ENCODE measurements at regions of chr14 and their contacts with region 1.

Region 1: DNA sequence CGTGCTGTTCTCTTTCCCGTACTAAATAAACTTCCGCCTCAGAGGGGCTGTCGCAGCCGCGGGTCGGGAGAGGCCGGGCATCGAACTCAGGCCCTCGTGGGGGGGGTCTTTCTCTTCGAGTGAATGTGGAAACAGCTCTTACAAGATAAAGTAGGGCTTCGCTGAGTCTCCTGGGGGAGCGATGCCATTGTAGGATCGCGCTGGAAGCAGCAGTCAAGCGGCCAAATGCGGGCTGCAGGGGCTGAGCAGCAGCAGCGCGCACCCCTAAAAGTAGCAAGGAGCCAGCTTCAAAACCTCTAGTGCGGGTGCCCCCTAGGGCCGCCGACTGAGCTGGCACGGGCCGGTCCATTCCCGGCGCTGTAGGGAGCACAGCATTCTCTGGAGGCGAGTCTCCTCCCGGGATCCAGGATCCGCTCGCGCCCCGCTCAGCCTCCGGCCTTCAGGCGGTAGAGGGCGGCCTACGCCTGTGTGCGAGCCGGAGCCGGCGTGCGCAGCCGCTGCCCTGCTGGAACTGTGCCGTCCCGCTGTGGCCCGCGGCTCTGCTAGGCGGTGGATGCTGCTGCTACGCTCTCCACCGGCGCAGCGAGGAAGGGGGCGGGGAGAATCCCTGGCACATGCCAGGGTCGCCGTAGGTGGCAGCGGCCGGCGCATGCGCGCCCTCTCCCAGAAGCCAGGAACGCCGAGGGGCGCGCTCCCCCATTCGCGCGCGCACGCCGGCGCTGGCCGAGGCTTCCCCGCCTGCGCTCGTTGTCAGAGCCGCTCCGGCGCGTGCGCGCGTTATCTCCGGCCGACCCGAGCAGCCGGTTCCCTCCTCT is at the start of gene FUT8:
- DNase-seq: peak; percentile 95
- H3K4me3 ChIP-seq: peak within 1 kb of the TSS; percentile 91
- H3K27ac ChIP-seq: peak within 1 kb of the TSS; percentile 85
- H3K4me1 ChIP-seq: peaks cover 31% of the 10 kb centered on the region
- CTCF ChIP-seq: peak; percentile 75
- total RNA-seq, gene FUT8: 90.3 and 128 TPM in 2 replicates

Region 2: DNA sequence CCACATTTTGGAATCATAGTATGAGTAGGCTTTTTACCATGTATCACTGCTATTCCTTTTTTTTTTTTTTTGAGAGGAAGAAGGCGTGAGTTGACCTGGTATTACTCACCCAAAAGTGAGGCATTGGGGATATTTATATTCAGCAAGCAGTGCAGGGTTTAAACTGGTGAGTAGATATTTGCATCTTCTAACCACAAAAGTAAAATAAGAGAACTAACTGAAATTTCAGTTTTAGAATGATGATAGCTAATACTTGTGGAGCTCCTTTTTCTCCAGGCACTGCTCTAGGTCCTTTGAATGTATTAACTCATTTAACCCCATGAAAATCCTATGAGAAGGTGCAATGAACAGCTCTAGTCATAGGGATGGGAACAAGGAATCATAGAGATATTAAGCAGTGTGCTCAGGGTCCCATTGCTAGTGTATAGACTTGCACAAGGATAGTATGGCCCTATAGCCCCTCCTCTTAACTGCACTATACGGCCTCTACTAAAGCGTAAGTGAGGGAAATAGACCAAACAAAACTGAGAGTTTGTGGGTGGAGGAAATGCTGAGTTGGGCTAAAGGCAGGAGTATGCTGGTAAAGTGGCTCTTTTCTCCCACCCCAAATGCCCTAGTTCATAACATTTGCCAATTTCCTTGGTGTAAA is 205.7 kb before region 1 on chr14:
- CTCF ChIA-PET with region 1: no interaction called
- POLR2A ChIA-PET with region 1: interaction called, 20 read pairs
- intact Hi-C with region 1: loop called (anchors 5 kb)
- DNase-seq: peak; percentile 88
- H3K4me3 ChIP-seq: peak overlapping the region; percentile 61
- H3K27ac ChIP-seq: peak overlapping the region; percentile 97
- H3K4me1 ChIP-seq: peaks cover 93% of the 10 kb centered on the region
- CTCF ChIP-seq: no peak

Region 3: DNA sequence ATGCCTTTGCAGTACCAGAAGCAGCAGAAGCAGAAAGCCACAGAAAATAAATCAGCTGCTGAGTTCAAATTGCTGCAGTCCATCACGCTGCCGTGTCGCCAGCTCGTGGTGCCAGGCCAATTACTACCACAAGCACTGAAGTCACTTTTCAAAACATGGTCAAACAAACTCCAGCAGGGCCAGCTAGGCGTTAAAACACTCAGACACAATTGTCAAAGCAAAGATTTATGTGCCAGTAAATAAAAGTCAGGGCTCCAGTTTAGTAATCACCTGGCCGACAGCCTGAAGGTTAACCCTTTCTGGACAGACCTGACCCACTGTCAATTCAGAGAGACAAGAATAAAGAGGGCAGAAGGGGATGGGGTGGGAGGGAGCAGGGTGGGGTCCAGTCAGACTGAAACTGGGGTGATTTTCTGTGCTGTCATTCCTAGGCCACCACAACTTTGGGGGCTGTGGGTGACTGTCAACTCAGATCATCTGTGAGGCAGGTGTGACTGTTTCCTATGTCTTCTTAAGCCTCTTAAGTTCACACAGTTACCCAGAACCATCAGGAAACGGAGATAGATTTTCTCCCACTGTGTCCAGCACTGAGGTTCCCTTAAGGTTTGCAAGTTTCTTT is 109.6 kb before region 1 on chr14:
- CTCF ChIA-PET with region 1: interaction called, 8 read pairs
- POLR2A ChIA-PET with region 1: interaction called, 77 read pairs
- intact Hi-C with region 1: loop called (anchors 1 kb)
- DNase-seq: peak; percentile 82
- H3K4me3 ChIP-seq: peak overlapping the region; percentile 61
- H3K27ac ChIP-seq: peak overlapping the region; percentile 99
- H3K4me1 ChIP-seq: peaks cover 98% of the 10 kb centered on the region
- CTCF ChIP-seq: no peak

Region 4: GRCh38 chr14:65361920-65362319 is 50.3 kb before region 1 on chr14:
- CTCF ChIA-PET with region 1: interaction called, 7 read pairs
- POLR2A ChIA-PET with region 1: interaction called, 25 read pairs
- intact Hi-C with region 1: no loop called
- DNase-seq: no peak
- H3K4me3 ChIP-seq: no peak overlapping the region
- H3K27ac ChIP-seq: no peak overlapping the region
- H3K4me1 ChIP-seq: peaks cover 54% of the 10 kb centered on the region
- CTCF ChIP-seq: no peak

Region 5: DNA sequence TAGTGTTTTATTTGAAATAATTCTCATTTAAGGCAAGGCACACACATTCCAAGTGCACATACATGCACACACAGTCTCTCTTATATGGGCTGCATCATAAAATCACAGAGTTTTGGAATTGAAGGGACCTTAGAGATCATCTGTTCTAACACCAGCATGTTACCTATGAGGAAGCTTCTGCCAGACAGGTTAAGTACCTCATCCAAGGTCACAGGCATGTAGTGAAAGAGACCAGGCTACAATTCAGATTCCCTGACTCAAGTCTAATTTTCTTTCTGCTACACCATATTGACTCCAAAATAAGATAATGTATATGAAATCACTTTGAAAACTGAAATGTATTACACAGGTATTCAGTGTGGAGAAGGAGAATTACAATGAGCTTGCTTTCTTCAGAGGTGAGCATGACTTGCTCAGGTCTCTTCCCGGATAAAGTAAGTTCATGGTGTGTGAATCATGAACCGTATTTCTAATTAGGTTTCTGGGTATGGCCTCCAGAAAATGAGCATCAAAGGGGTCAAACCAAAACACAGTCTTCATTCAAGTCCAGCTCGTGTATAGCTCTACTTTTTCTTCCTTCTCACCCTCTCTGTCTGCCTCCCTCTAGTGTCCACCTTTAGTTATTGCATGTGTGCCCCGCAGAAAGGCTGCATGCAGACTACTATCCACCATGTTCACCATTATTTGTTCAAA is 412.2 kb after region 1 on chr14:
- CTCF ChIA-PET with region 1: interaction called, 13 read pairs
- POLR2A ChIA-PET with region 1: interaction called, 15 read pairs
- intact Hi-C with region 1: loop called (anchors 1 kb)
- DNase-seq: peak; percentile 72
- H3K4me3 ChIP-seq: no peak overlapping the region
- H3K27ac ChIP-seq: no peak overlapping the region
- H3K4me1 ChIP-seq: no peaks in the 10 kb centered on the region
- CTCF ChIP-seq: peak; percentile 97